Dorsolateral prefrontal cortex (tissue), 120 donors: ENCODE measurements at regions of chr16 and their contacts with region 1.

Region 1: GRCh38 chr16:80084685-80085084 is 456.1 kb upstream of the DYNLRB2 start:
- DNase-seq: peak in 6 of 10 donors; percentile 7 to 48 (median 38)
- H3K4me3 ChIP-seq: peak overlapping the region in 2 of 59 donors; percentile 1 to 13
- H3K27ac ChIP-seq: no peak overlapping the region
- H3K27me3 ChIP-seq: peaks cover 0 to 26% (median 0%) of the 10 kb centered on the region in 45 donors
- CTCF ChIP-seq: peak in 55 of 56 donors; percentile 9 to 79 (median 59)

Region 2: GRCh38 chr16:79767421-79768275 is 317.0 kb before region 1 on chr16:
- intact Hi-C with region 1: loop called in 1 of 2 experiments (anchors 10 kb)
- DNase-seq: peak in 5 of 10 donors; percentile 15 to 56 (median 43)
- H3K4me3 ChIP-seq: peak overlapping the region in 56 of 59 donors; percentile 4 to 62 (median 38)
- H3K27ac ChIP-seq: peak overlapping the region in 57 of 59 donors; percentile 0 to 88 (median 75)
- H3K27me3 ChIP-seq: no peaks in the 10 kb centered on the region
- CTCF ChIP-seq: peak in 46 of 56 donors; percentile 8 to 60 (median 36)

Region 3: GRCh38 chr16:80002261-80002660 is 82.4 kb before region 1 on chr16:
- intact Hi-C with region 1: loop called in 1 of 2 experiments (anchors 5 kb)
- DNase-seq: no peak
- H3K4me3 ChIP-seq: no peak overlapping the region
- H3K27ac ChIP-seq: no peak overlapping the region
- H3K27me3 ChIP-seq: peaks cover 0 to 26% (median 4%) of the 10 kb centered on the region in 45 donors
- CTCF ChIP-seq: no peak

Region 4: DNA sequence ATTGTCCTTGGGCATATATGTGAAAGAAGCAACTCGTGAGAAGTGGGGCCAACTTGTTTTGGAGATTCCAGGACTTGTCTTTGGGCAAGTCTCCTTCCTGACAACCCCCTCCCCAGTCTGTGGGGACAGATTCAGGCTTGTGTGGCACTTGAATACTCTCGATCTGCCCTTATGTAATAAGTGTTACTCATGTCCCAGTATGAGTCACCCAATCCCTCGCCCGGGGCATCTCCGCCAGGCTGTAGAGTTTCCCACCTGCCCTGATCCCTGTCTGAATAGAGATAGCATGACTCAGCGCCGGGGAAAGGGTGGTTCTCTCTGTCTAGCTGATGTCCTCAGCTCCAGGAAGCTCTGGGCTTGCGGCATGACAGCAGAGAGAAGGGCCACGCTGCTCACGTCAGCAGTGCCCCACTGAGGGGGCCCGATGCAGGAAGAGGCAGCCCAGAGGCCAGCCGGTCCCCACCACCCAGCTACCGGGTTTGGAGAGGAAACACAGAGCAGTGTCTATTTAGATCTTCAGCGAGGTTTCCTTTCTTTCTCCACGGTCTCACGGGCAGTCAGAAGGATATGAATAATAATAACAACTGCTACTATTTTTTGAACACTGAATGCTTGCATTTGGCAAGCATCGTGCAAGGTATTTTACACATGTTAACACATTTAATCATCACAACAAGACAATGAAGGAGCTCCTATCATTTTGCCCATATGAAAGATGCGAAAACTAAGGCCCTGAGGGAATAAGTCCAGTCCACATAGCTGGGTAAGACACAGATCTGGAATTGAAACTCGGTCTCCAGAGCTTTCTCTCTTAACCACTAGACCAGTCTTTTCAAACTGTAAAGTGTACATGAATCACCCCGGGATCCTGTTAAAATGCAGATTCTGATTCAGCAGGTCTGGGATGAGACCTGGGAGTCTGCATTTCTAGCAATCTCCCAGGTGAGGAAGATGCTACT is 57.4 kb before region 1 on chr16:
- intact Hi-C with region 1: no loop called
- DNase-seq: peak in 5 of 10 donors; percentile 12 to 50 (median 31)
- H3K4me3 ChIP-seq: peak overlapping the region in 4 of 59 donors; percentile 8 to 21 (median 18)
- H3K27ac ChIP-seq: no peak overlapping the region
- H3K27me3 ChIP-seq: peaks cover 0 to 50% (median 2%) of the 10 kb centered on the region in 45 donors
- CTCF ChIP-seq: no peak